ENCODE measurements at regions of chr17 and their contacts with region 1.

Region 1: GRCh38 chr17:34883151-34884000 is 77.9 kb downstream of the CCT6B start:
- DNase-seq: peak; percentile 0
- H3K4me3 ChIP-seq: no peak overlapping the region
- H3K27ac ChIP-seq: no peak overlapping the region
- H3K4me1 ChIP-seq: no peaks in the 10 kb centered on the region
- H3K27me3 ChIP-seq: no peaks in the 10 kb centered on the region
- CTCF ChIP-seq: no peak

Region 2: GRCh38 chr17:34613064-34614019 is 270.0 kb before region 1 on chr17:
- CTCF ChIA-PET with region 1: no interaction called
- POLR2A ChIA-PET with region 1: interaction called, 11 read pairs
- intact Hi-C with region 1: no loop called
- DNase-seq: peak; percentile 48
- H3K4me3 ChIP-seq: no peak overlapping the region
- H3K27ac ChIP-seq: peak overlapping the region; percentile 24
- H3K4me1 ChIP-seq: peaks cover 50% of the 10 kb centered on the region
- H3K27me3 ChIP-seq: no peaks in the 10 kb centered on the region
- CTCF ChIP-seq: no peak

Region 3: GRCh38 chr17:34847938-34848337 is 35.4 kb before region 1 on chr17:
- CTCF ChIA-PET with region 1: no interaction called
- POLR2A ChIA-PET with region 1: no interaction called
- intact Hi-C with region 1: no loop called
- DNase-seq: no peak
- H3K4me3 ChIP-seq: no peak overlapping the region
- H3K27ac ChIP-seq: no peak overlapping the region
- H3K4me1 ChIP-seq: no peaks in the 10 kb centered on the region
- H3K27me3 ChIP-seq: no peaks in the 10 kb centered on the region
- CTCF ChIP-seq: no peak

Region 4: GRCh38 chr17:34865732-34866131 is 17.6 kb before region 1 on chr17:
- CTCF ChIA-PET with region 1: no interaction called
- POLR2A ChIA-PET with region 1: no interaction called
- intact Hi-C with region 1: no loop called
- DNase-seq: no peak
- H3K4me3 ChIP-seq: no peak overlapping the region
- H3K27ac ChIP-seq: no peak overlapping the region
- H3K4me1 ChIP-seq: no peaks in the 10 kb centered on the region
- H3K27me3 ChIP-seq: no peaks in the 10 kb centered on the region
- CTCF ChIP-seq: no peak